HCT116 (cell line): ENCODE measurements at regions of chr12 and their contacts with region 1.

Region 1: GRCh38 chr12:63151623-63152320 is 771 bp upstream of the AVPR1A start:
- DNase-seq: peak; percentile 43
- ATAC-seq: peak; percentile 94
- H3K4me3 ChIP-seq: peak overlapping the region; percentile 37 to 52
- H3K27ac ChIP-seq: no peak overlapping the region
- H3K4me1 ChIP-seq: peaks cover 0 to 11% of the 10 kb centered on the region in 2 experiments; a peak in 1 of 4 replicates
- H3K27me3 ChIP-seq: no peaks in the 10 kb centered on the region
- CTCF ChIP-seq: peak; percentile 41 to 86 (median 82); a peak in 5 of 6 replicates
- POLR2A ChIP-seq: no peak
- RAD21 ChIP-seq: peak; percentile 52

Region 2: DNA sequence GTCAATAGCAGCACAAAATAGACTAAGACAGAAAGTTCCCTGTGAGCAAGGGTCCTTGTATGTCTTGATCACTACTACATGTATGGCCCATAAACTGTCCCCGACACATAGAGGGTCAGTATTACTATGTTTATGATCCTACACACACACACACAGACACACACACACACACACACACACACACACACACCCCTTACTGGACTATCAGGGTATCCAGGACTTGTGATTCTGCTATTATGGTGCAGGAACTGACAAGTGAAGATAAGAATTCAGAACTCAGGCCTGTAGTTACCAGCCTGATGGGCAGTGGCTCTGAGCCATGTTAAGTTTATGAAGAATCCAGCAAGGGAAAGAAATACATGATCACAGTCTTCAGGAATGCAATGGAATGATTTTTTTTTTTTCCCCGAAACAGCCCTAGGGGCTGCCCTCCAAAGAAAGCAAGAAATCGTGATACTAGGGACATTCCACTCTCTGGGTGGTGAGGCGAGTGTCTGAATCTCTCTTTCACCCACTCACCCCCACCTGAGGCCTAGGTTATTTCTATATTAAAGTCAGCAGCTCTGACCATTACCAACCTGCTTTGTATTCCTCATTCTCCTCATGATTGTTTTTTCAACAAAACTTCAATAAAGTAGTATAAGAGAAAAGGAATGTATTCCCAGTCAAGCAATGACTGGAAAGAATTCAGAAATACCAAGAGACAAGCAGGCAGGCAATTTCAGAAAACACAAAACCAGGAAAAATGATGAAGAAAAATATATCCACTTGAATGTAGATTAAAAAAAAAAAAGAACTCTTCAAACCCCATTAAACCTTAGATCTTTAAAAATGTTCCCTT is 106.5 kb before region 1 on chr12:
- CTCF ChIA-PET with region 1: no interaction called
- POLR2A ChIA-PET with region 1: no interaction called
- RAD21 ChIA-PET with region 1: no interaction called
- intact Hi-C with region 1: no loop called
- DNase-seq: no peak
- ATAC-seq: no peak
- H3K4me3 ChIP-seq: no peak overlapping the region
- H3K27ac ChIP-seq: no peak overlapping the region
- H3K4me1 ChIP-seq: no peaks in the 10 kb centered on the region
- H3K27me3 ChIP-seq: no peaks in the 10 kb centered on the region
- CTCF ChIP-seq: no peak
- POLR2A ChIP-seq: no peak
- RAD21 ChIP-seq: no peak

Region 3: GRCh38 chr12:63086149-63086915 is 65.4 kb before region 1 on chr12:
- CTCF ChIA-PET with region 1: no interaction called
- POLR2A ChIA-PET with region 1: no interaction called
- RAD21 ChIA-PET with region 1: no interaction called
- intact Hi-C with region 1: no loop called
- DNase-seq: no peak
- ATAC-seq: no peak
- H3K4me3 ChIP-seq: no peak overlapping the region
- H3K27ac ChIP-seq: no peak overlapping the region
- H3K4me1 ChIP-seq: no peaks in the 10 kb centered on the region
- H3K27me3 ChIP-seq: no peaks in the 10 kb centered on the region
- CTCF ChIP-seq: no peak
- POLR2A ChIP-seq: no peak
- RAD21 ChIP-seq: no peak

Region 4: GRCh38 chr12:63164911-63165310 is 13.1 kb after region 1 on chr12:
- CTCF ChIA-PET with region 1: interaction called, 13 read pairs
- POLR2A ChIA-PET with region 1: no interaction called
- RAD21 ChIA-PET with region 1: no interaction called
- intact Hi-C with region 1: no loop called
- DNase-seq: no peak
- ATAC-seq: no peak
- H3K4me3 ChIP-seq: no peak overlapping the region
- H3K27ac ChIP-seq: no peak overlapping the region
- H3K4me1 ChIP-seq: no peaks in the 10 kb centered on the region
- H3K27me3 ChIP-seq: no peaks in the 10 kb centered on the region
- CTCF ChIP-seq: no peak
- POLR2A ChIP-seq: no peak
- RAD21 ChIP-seq: no peak

Region 5: DNA sequence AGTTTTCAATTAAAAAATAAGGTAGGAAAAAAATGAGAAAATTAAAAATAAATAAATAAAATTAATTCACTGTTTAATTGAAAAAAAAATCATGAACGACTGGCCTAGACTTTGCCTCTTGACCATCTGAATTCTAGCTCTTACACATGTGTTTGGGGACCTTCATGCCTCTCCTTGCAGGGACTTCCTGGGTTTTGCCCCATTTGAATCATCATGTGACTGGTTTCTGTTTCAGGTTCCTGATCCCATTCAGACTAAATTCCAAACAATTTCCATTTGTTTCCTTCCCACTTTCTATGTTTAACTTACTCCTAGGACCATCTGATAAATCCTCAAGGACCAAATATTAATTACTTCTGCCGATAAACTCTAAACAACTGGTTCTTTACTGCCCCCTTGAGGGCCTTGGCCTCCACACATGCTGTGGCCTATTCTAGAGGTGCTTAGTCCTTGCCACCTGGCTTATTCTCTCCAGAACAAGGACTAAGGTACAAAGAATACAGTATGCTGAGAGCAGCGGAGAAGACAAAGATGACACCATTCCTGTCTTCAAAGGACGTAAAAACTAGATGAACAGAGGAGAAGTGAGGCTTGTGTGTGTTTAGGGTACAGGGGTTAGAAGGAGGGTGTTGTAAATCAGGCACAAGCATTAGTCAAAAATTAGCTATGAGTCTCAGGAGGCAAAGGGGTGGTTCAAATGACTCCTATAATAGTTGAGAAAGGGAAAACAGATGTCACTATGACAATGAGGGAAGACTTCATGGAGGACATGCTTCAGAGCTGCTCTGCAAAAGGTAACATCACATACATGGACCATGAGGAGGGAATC is 125.0 kb after region 1 on chr12:
- CTCF ChIA-PET with region 1: interaction called, 4 read pairs
- POLR2A ChIA-PET with region 1: no interaction called
- RAD21 ChIA-PET with region 1: no interaction called
- intact Hi-C with region 1: loop called (anchors 5 kb)
- DNase-seq: peak; percentile 61
- ATAC-seq: peak; percentile 98
- H3K4me3 ChIP-seq: no peak overlapping the region
- H3K27ac ChIP-seq: no peak overlapping the region
- H3K4me1 ChIP-seq: no peaks in the 10 kb centered on the region
- H3K27me3 ChIP-seq: no peaks in the 10 kb centered on the region
- CTCF ChIP-seq: peak; percentile 60 to 91 (median 90); a peak in 5 of 6 replicates
- POLR2A ChIP-seq: no peak
- RAD21 ChIP-seq: peak; percentile 74